ENCODE measurements at regions of chr22 and their contacts with region 1.

Region 1: DNA sequence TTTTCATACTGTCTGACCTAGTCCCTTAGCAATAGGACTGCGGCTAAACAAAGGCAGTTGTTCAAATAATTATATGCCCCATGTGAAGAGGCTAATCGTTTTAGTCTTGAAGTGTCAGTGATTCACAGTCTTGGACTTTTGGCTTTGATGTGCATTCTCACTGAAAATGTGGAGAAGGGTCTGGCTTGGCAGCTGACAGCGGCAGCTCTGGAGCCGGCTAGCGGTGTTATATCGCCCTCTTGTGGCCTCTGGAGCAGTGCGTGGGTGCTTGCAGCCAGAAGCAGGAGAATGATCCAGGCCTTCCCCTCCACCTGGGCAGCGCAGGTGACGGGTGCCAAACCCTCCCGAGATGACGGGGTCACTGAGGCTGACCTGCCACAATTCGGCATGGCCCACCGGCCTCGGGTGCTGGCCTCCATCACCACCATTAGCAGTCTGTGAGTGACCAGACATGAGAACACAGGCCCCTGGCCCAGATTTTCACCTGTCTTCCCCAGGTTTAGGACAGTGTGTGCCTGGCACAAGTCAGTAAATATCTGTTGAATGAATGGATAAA is 90.3 kb upstream of the PITPNB start:
- DNase-seq: peak; percentile 82
- ATAC-seq: peak; percentile 71 to 80

Region 2: GRCh38 chr22:26763633-26764361 is 1245.6 kb before region 1 on chr22:
- intact Hi-C with region 1: loop called in 1 of 2 experiments (anchors 5 kb)
- DNase-seq: no peak
- ATAC-seq: no peak

Region 3: GRCh38 chr22:27885977-27886842 is 123.1 kb before region 1 on chr22:
- intact Hi-C with region 1: loop called (anchors 2 to 5 kb)
- DNase-seq: no peak
- ATAC-seq: peak in 1 of 2 donors; percentile 35